ENCODE measurements at regions of chr7 and their contacts with region 1.

Region 1: DNA sequence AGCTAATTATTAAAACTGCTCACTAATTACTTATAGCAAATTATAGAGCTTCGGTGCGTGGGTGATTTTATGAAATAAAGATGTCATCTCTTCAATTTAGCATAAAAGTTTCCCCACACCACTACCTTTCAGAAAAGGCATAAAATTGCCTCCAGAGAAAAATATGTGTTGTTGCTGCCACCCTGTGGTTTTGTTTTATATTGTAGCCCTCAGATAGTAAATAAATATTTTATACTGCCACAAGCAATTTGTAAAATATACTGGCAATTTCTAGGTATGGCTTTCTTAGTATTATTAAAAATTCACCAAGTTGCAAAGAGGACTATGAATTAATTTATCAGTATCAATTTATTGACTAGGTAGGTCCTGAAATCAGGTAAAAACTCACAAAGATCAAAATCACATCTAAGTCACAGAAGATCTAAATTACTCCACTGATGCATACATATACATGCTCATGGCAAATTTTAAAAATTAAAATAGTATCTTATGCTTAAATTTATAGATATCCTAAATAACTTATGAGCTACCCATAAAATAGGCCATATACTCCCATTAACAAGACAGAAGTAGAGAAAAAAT is 26.5 kb downstream of the ASNS start:
- DNase-seq: no peak
- H3K4me3 ChIP-seq: no peak overlapping the region
- H3K27me3 ChIP-seq: no peaks in the 10 kb centered on the region
- CTCF ChIP-seq: peak; percentile 44

Region 2: GRCh38 chr7:97174303-97174702 is 671.4 kb before region 1 on chr7:
- CTCF ChIA-PET with region 1: no interaction called
- POLR2A ChIA-PET with region 1: no interaction called
- DNase-seq: no peak
- H3K4me3 ChIP-seq: no peak overlapping the region
- H3K27me3 ChIP-seq: no peaks in the 10 kb centered on the region
- CTCF ChIP-seq: no peak

Region 3: GRCh38 chr7:97835296-97836138 is 10.2 kb before region 1 on chr7:
- CTCF ChIA-PET with region 1: interaction called, 22 read pairs
- POLR2A ChIA-PET with region 1: no interaction called
- DNase-seq: no peak
- H3K4me3 ChIP-seq: no peak overlapping the region
- H3K27me3 ChIP-seq: no peaks in the 10 kb centered on the region; the same call in 1 of the 2 replicates
- CTCF ChIP-seq: peak; percentile 63

Region 4: GRCh38 chr7:98223898-98224840 is 378.5 kb after region 1 on chr7:
- CTCF ChIA-PET with region 1: no interaction called
- POLR2A ChIA-PET with region 1: no interaction called
- DNase-seq: no peak
- H3K4me3 ChIP-seq: no peak overlapping the region
- H3K27me3 ChIP-seq: no peaks in the 10 kb centered on the region
- CTCF ChIP-seq: no peak

Measured in BJ (cell line).